ENCODE measurements at regions of chr4 and their contacts with region 1.

Region 1: DNA sequence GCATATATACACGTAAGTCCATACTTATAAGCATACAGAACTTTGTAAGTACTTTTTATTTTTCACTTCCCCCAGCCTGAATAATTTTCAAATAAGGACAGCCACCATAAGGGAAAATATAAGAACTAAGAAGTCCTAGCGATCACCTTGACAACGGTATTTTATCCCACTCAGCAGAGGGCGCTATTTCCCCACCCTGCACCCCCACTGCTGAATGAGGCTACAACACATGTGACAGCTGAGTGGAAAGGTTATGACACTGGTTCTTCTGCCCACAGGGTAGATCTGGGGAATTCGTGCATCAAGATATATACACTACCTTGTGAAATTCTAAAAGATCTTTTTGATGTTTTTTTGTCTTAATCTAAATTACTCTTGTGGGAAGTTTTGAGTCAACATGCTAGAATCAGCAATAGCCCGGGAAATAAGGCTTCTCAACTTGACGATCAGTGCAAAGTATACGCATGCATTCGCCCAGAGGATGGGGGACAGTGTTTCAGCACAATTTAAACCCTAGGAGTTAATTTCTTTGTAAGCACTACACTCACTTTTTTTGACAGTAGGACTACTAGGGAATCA is 151.5 kb downstream of the CORIN start:
- DNase-seq: peak; percentile 22 to 71 (median 58)
- ATAC-seq: peak; percentile 71
- H3K4me3 ChIP-seq: no peak overlapping the region
- H3K4me3 Mint-ChIP-seq: no peak overlapping the region
- H3K27ac ChIP-seq: no peak overlapping the region
- H3K27ac Mint-ChIP-seq: no peak overlapping the region
- H3K4me1 ChIP-seq: no peaks in the 10 kb centered on the region
- H3K4me1 Mint-ChIP-seq: no peaks in the 10 kb centered on the region
- H3K27me3 ChIP-seq: peaks cover 0 to 4% of the 10 kb centered on the region in 2 experiments
- H3K27me3 Mint-ChIP-seq: peaks cover 8% of the 10 kb centered on the region
- CTCF ChIP-seq: peak; percentile 71

Region 2: DNA sequence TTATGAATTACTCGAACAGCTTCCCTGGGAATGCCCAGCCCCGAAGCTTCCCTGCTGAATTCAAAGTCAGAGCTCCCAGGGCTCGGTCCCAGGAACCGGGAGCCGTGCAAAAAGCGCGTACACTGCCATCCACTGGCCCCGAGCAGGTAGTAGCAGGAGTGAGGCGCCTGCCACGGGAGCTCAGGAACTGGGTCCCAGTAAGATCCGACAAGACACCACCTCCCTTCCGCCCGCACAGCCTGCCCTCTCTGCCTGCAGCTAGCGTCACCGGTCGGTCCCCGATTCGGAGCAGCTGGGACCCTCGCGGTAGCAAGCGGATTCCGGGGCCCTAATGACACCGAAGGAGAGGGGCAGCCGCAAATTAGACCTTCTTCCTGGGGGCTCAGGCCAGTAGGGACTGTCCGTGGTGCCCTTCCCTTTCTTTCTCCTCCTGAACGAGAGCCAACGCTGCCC is 150.3 kb after region 1 on chr4:
- CTCF ChIA-PET with region 1: interaction called, 3 read pairs
- POLR2A ChIA-PET with region 1: no interaction called
- intact Hi-C with region 1: loop called (anchors 5 kb)
- DNase-seq: peak in 7 of 9 experiments; percentile 39 to 74 (median 53)
- ATAC-seq: peak; percentile 67
- H3K4me3 ChIP-seq: peak overlapping the region; percentile 66
- H3K4me3 Mint-ChIP-seq: peak overlapping the region; percentile 85
- H3K27ac ChIP-seq: no peak overlapping the region
- H3K27ac Mint-ChIP-seq: peak overlapping the region; percentile 37
- H3K4me1 ChIP-seq: peaks cover 14% of the 10 kb centered on the region
- H3K4me1 Mint-ChIP-seq: peaks cover 25% of the 10 kb centered on the region
- H3K27me3 ChIP-seq: no peaks in the 10 kb centered on the region
- H3K27me3 Mint-ChIP-seq: peaks cover 15% of the 10 kb centered on the region
- CTCF ChIP-seq: peak; percentile 34

Region 3: DNA sequence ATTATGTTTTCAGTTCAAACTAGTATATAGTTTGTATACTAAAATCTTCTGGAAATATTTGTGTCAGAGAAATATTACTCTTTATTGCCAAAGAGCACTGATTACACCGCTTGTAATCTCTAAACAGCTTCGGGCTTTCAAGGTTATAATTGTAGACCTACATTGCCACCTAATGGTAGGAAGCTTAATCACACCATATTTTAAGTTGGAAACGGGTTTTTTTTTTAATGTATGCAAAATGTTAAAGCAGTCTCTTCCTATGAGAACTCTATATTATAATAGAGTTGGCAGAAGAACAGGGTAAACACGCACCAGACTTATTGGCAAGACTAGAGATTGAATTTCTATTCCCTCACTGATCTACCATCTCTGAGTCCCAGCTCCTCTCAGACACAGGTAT is 247.5 kb after region 1 on chr4:
- CTCF ChIA-PET with region 1: interaction called, 22 read pairs
- POLR2A ChIA-PET with region 1: no interaction called
- intact Hi-C with region 1: loop called (anchors 1 kb)
- DNase-seq: peak in 2 of 9 experiments; percentile 60 to 72
- ATAC-seq: peak; percentile 74
- H3K4me3 ChIP-seq: no peak overlapping the region
- H3K4me3 Mint-ChIP-seq: no peak overlapping the region
- H3K27ac ChIP-seq: no peak overlapping the region
- H3K27ac Mint-ChIP-seq: no peak overlapping the region
- H3K4me1 ChIP-seq: no peaks in the 10 kb centered on the region
- H3K4me1 Mint-ChIP-seq: no peaks in the 10 kb centered on the region
- H3K27me3 ChIP-seq: no peaks in the 10 kb centered on the region
- H3K27me3 Mint-ChIP-seq: peaks cover 6% of the 10 kb centered on the region
- CTCF ChIP-seq: peak; percentile 87

Region 4: DNA sequence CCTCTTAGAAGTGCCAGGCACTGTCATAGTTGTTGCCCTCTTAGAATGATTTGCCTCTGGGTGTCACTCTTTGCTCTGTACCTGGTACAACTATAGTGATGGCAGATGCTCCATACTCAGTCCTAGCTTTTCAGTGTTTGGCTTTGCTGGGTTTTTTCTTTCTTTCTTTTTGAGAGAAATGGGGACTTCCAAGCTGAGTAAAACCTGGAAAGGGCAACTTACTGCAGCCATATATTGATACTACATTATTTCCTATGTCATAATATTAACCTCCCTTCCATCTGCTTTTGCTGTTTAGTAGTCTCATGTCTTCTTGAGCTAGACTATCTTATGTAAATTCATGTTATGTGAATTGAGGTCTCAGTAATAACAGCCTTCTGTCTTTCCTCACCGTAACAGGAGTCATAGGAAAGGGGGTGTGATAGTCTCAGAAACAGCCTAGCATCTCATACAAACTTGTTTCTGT is 379.2 kb after region 1 on chr4:
- CTCF ChIA-PET with region 1: no interaction called
- POLR2A ChIA-PET with region 1: no interaction called
- intact Hi-C with region 1: no loop called
- DNase-seq: no peak
- ATAC-seq: no peak
- H3K4me3 ChIP-seq: no peak overlapping the region
- H3K4me3 Mint-ChIP-seq: no peak overlapping the region
- H3K27ac ChIP-seq: no peak overlapping the region
- H3K27ac Mint-ChIP-seq: no peak overlapping the region
- H3K4me1 ChIP-seq: no peaks in the 10 kb centered on the region
- H3K4me1 Mint-ChIP-seq: peaks cover 16% of the 10 kb centered on the region
- H3K27me3 ChIP-seq: no peaks in the 10 kb centered on the region
- H3K27me3 Mint-ChIP-seq: no peaks in the 10 kb centered on the region
- CTCF ChIP-seq: no peak

Region 5: DNA sequence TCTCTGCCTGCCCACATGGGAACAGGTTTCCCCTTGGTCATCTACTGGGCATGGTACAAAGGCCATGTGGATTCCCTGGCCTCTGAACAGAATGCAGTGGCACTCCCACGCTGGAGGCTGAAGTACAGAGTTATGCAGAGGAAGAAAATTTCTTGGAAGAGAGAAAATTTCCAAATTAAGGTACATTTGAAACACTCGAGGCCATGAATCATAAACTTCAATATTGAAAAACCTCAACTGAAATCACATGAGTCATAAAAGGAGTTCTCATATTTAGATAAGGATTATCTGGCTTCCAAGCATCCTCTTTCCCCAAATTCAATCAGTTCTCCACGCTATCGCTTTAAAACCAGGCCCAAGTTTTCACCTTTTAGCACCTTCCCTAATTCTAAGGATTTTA is 475.8 kb after region 1 on chr4:
- CTCF ChIA-PET with region 1: no interaction called
- POLR2A ChIA-PET with region 1: no interaction called
- intact Hi-C with region 1: loop called in 1 of 2 experiments (anchors 10 kb)
- DNase-seq: no peak
- ATAC-seq: no peak
- H3K4me3 ChIP-seq: no peak overlapping the region
- H3K4me3 Mint-ChIP-seq: no peak overlapping the region
- H3K27ac ChIP-seq: no peak overlapping the region
- H3K27ac Mint-ChIP-seq: no peak overlapping the region
- H3K4me1 ChIP-seq: no peaks in the 10 kb centered on the region
- H3K4me1 Mint-ChIP-seq: peaks cover 3% of the 10 kb centered on the region
- H3K27me3 ChIP-seq: no peaks in the 10 kb centered on the region
- H3K27me3 Mint-ChIP-seq: no peaks in the 10 kb centered on the region
- CTCF ChIP-seq: no peak